Heart right ventricle (tissue), 16 donors: ENCODE measurements at regions of chr1 and their contacts with region 1.

Region 1: GRCh38 chr1:151739590-151740375 is 18.5 kb downstream of the RIIAD1 start:
- DNase-seq: no peak
- ATAC-seq: peak in 1 of 8 donors; percentile 50
- H3K4me3 ChIP-seq: no peak overlapping the region
- H3K27ac ChIP-seq: no peak overlapping the region
- H3K4me1 ChIP-seq: peaks cover 0 to 4% (median 0%) of the 10 kb centered on the region in 9 donors
- H3K27me3 ChIP-seq: no peaks in the 10 kb centered on the region
- CTCF ChIP-seq: no peak

Region 2: DNA sequence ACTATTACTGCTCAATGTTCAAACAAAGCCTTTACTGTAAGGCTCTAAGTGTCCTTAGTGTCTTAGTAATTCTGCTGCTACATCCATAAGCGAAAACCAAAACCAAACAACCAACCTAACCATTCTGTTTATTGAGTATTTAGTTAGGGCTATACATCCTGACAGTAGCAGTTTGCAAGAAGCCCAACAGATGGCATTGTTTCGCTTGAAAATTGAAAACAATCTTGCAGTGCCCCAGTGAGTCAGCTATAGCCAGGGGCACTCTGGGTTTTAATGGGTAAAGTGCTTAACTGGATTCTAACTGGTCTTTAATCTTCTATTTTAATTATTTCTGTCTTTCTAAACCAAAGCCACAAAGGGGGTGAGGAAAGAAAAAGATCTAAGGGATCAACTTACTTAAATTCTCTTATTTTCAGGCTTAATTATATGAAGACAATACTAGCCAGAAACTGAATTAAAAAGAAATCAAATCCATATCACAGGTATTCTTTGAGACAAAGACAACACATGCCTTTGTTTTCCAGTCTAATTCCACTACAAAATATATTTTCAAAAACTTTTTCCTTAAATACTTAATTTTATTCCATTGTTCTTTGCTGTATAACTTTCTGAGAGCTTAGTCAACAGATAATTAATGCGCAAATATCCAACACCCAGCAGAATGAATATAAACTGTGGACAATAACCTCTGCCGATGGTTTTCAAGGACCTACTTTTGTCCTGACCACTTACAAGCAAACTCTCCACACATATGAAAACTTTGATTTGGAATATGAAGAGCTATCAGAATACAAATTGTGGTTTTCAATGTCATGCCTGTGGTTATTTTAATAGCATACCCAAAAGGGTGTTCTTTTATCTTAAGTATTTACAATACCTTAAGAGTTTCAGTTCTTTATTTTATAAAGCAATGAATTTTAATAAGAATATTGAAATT is 295.7 kb before region 1 on chr1:
- intact Hi-C with region 1: loop called in 8 of 10 experiments (anchors 5 to 10 kb)
- DNase-seq: peak in 1 of 2 donors; percentile 64
- ATAC-seq: peak; percentile 62 to 91 (median 88)
- H3K4me3 ChIP-seq: no peak overlapping the region
- H3K27ac ChIP-seq: peak overlapping the region in 1 of 10 donors; percentile 43
- H3K4me1 ChIP-seq: peaks cover 3 to 66% (median 40%) of the 10 kb centered on the region in 9 donors
- H3K27me3 ChIP-seq: no peaks in the 10 kb centered on the region
- CTCF ChIP-seq: peak; percentile 30 to 83 (median 68)

Region 3: DNA sequence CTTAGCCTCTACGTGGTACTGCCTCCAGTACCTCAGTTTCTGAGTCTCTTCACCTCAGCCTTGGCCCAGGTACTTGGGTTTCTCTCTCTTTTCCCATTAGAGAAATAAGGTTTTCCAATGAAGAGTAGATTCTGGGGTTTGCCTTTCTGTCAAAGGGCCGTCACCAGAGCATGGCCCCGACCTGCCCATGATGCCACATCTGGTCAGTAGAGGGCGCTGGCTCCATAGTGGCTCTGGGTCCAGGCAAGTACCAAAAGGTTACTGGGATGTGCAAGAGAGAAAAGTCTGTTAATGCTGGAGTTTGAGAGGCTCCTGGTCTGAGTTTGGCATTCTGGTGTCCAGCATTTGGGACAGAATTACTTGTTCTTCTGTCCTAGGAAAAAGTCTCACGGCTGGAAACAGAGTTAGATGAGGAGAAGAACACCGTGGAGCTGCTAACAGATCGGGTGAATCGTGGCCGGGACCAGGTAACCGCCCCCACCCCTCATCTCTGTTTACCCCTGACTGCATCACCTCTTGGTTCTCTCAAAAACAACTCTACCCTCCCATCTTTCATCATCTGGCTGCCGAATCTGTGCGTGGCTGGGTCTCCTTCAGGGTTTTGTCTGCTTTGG is 205.0 kb before region 1 on chr1:
- intact Hi-C with region 1: loop called (anchors 2 to 10 kb)
- DNase-seq: peak; percentile 74 to 76
- ATAC-seq: peak; percentile 65 to 79 (median 70)
- H3K4me3 ChIP-seq: no peak overlapping the region
- H3K27ac ChIP-seq: no peak overlapping the region
- H3K4me1 ChIP-seq: peaks cover 0 to 9% (median 7%) of the 10 kb centered on the region in 9 donors
- H3K27me3 ChIP-seq: no peaks in the 10 kb centered on the region
- CTCF ChIP-seq: peak; percentile 65 to 90 (median 84)

Region 4: GRCh38 chr1:151539990-151540981 is 199.5 kb before region 1 on chr1 and contains the start of gene TUFT1:
- intact Hi-C with region 1: loop called in 9 of 10 experiments (anchors 2 to 10 kb)
- DNase-seq: peak; percentile 89 to 91
- ATAC-seq: peak; percentile 97 to 98 (median 98)
- H3K4me3 ChIP-seq: peak within 1 kb of the TSS; percentile 48 to 86 (median 70)
- H3K27ac ChIP-seq: peak within 1 kb of the TSS in 8 of 10 donors; percentile 30 to 79 (median 59)
- H3K4me1 ChIP-seq: peaks cover 0 to 24% (median 12%) of the 10 kb centered on the region in 9 donors
- H3K27me3 ChIP-seq: peaks cover 0 to 11% (median 0%) of the 10 kb centered on the region in 7 donors
- CTCF ChIP-seq: no peak
- total RNA-seq, gene TUFT1: 2.9 to 13.0 (median 5.5) TPM

Region 5: GRCh38 chr1:151594143-151594625 is 145.6 kb before region 1 on chr1:
- intact Hi-C with region 1: loop called (anchors 2 to 10 kb)
- DNase-seq: peak; percentile 67 to 73
- ATAC-seq: peak in 6 of 8 donors; percentile 55 to 76 (median 62)
- H3K4me3 ChIP-seq: peak overlapping the region in 4 of 10 donors; percentile 15 to 30 (median 16)
- H3K27ac ChIP-seq: no peak overlapping the region
- H3K4me1 ChIP-seq: peaks cover 0 to 12% (median 0%) of the 10 kb centered on the region in 9 donors
- H3K27me3 ChIP-seq: no peaks in the 10 kb centered on the region
- CTCF ChIP-seq: peak; percentile 72 to 95 (median 92)

Region 6: DNA sequence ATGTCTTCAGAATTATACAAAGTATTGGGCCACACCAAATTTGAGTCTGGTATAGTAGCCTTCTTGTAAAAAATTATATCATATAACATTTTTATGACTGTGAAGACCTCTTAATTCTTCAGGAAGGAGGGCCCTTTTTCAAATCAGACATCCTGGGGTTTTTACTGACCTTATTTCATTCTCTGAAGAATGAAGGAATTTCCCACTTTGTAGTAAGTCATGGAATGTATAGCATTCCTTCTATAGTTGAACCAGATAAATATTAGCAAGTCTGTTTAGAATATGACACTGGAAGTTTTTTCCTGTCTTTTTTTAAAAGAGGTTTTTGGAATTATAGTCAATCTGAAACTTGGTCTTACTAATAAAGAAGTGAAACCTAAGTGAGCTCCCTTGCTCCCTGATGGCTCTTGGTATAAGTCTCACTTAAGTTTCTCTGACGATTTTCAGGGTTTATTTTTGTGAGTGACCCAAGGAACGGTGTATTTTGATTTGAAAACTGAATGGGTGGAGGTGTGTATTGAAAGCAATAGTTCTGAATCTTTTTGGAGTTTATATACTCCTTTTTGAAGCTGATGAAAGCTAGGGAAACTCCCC is 104.2 kb before region 1 on chr1:
- intact Hi-C with region 1: no loop called
- DNase-seq: no peak
- ATAC-seq: no peak
- H3K4me3 ChIP-seq: no peak overlapping the region
- H3K27ac ChIP-seq: no peak overlapping the region
- H3K4me1 ChIP-seq: peaks cover 5 to 41% (median 27%) of the 10 kb centered on the region in 9 donors
- H3K27me3 ChIP-seq: no peaks in the 10 kb centered on the region
- CTCF ChIP-seq: no peak

Region 7: GRCh38 chr1:151693076-151693651 is 46.6 kb before region 1 on chr1:
- intact Hi-C with region 1: loop called in 6 of 10 experiments (anchors 2 to 5 kb)
- DNase-seq: no peak
- ATAC-seq: no peak
- H3K4me3 ChIP-seq: no peak overlapping the region
- H3K27ac ChIP-seq: no peak overlapping the region
- H3K4me1 ChIP-seq: peaks cover 0 to 13% (median 0%) of the 10 kb centered on the region in 9 donors
- H3K27me3 ChIP-seq: no peaks in the 10 kb centered on the region
- CTCF ChIP-seq: peak in 7 of 9 donors; percentile 44 to 61 (median 53)

Region 8: DNA sequence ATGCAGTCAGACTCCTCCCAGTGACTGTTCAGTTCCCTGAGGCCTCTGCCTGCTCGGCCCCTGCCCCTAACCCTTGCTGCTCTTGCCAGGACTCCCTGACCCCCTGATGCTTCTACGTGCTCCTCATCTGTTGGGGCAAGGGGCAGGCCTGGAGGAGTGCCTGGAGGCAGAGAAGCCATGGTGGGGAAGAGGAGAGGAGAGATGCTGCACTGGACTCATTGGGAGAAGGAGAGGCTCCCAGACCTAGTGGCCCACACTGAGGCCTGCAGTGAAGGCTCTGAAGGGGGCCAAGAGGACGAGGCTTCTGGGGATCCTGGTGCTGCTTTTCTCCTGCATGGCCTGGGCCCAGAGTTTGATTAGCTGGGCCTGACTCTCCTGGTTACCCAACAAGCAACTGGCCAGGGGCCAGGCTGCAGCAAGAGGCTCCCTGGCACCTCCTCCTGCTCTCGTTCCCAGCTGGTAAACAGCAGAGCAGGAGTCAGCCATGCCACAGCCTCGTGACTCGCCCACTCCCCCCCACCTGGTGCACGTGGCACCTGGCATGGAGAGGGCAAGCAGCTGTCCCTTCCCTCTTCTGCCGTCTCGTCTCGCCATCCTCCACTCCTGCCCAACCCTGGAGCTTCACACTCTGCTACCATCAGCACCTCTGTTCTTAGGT is 92.7 kb after region 1 on chr1:
- intact Hi-C with region 1: loop called in 1 of 10 experiments (anchors 5 kb)
- DNase-seq: peak; percentile 75 to 80
- ATAC-seq: peak; percentile 48 to 89 (median 84)
- H3K4me3 ChIP-seq: no peak overlapping the region
- H3K27ac ChIP-seq: peak overlapping the region in 9 of 10 donors; percentile 14 to 74 (median 54)
- H3K4me1 ChIP-seq: peaks cover 0 to 43% (median 18%) of the 10 kb centered on the region in 9 donors
- H3K27me3 ChIP-seq: peaks cover 0 to 12% (median 5%) of the 10 kb centered on the region in 7 donors
- CTCF ChIP-seq: no peak

Region 9: GRCh38 chr1:151843398-151843797 is 103.6 kb after region 1 on chr1:
- intact Hi-C with region 1: no loop called
- DNase-seq: no peak
- ATAC-seq: no peak
- H3K4me3 ChIP-seq: no peak overlapping the region
- H3K27ac ChIP-seq: no peak overlapping the region
- H3K4me1 ChIP-seq: peaks cover 4 to 28% (median 16%) of the 10 kb centered on the region in 9 donors
- H3K27me3 ChIP-seq: peaks cover 8 to 48% (median 30%) of the 10 kb centered on the region in 7 donors
- CTCF ChIP-seq: no peak